B cell (primary cell): ENCODE measurements at regions of chr7 and their contacts with region 1.

Region 1: GRCh38 chr7:50092579-50093491 is at the start of gene ZPBP:
- DNase-seq: peak; percentile 83
- ATAC-seq: peak; percentile 80
- H3K4me3 ChIP-seq: peak within 1 kb of the TSS; percentile 46 to 82 (median 62)
- H3K4me3 Mint-ChIP-seq: peak within 1 kb of the TSS; percentile 94
- H3K27ac ChIP-seq: peak within 1 kb of the TSS; percentile 35 to 43
- H3K27ac Mint-ChIP-seq: peak within 1 kb of the TSS; percentile 72
- H3K4me1 ChIP-seq: peaks cover 4 to 5% of the 10 kb centered on the region in 2 donors
- H3K4me1 Mint-ChIP-seq: peaks cover 5% of the 10 kb centered on the region
- H3K27me3 ChIP-seq: no peaks in the 10 kb centered on the region
- H3K27me3 Mint-ChIP-seq: no peaks in the 10 kb centered on the region
- CTCF ChIP-seq: peak; percentile 97
- total RNA-seq, gene ZPBP: not detected in 2 replicates

Region 2: DNA sequence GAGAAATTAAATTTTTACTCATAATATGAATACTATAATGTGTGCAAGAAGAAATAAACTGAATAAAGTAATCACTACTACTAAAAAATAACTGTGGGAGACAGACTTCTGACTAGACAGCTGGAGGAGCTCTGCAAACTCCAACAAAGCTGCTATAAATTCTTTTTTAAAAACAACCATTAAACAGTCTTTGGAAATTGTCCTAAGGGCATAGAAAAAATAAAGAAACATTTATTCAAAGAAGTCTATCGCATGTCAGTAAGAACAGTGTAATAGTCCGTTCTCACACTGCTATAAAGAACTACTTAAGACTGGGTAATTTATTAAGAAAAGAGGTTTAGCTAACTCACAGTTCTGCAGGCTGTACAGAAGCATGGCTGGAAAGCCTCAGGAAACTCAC is 55.7 kb before region 1 on chr7:
- CTCF ChIA-PET with region 1: no interaction called
- POLR2A ChIA-PET with region 1: no interaction called
- intact Hi-C with region 1: no loop called
- DNase-seq: no peak
- ATAC-seq: no peak
- H3K4me3 ChIP-seq: no peak overlapping the region
- H3K4me3 Mint-ChIP-seq: no peak overlapping the region
- H3K27ac ChIP-seq: no peak overlapping the region
- H3K27ac Mint-ChIP-seq: no peak overlapping the region
- H3K4me1 ChIP-seq: no peaks in the 10 kb centered on the region
- H3K4me1 Mint-ChIP-seq: no peaks in the 10 kb centered on the region
- H3K27me3 ChIP-seq: peaks cover 0 to 17% (median 7%) of the 10 kb centered on the region in 4 experiments
- H3K27me3 Mint-ChIP-seq: peaks cover 30% of the 10 kb centered on the region
- CTCF ChIP-seq: no peak

Region 3: DNA sequence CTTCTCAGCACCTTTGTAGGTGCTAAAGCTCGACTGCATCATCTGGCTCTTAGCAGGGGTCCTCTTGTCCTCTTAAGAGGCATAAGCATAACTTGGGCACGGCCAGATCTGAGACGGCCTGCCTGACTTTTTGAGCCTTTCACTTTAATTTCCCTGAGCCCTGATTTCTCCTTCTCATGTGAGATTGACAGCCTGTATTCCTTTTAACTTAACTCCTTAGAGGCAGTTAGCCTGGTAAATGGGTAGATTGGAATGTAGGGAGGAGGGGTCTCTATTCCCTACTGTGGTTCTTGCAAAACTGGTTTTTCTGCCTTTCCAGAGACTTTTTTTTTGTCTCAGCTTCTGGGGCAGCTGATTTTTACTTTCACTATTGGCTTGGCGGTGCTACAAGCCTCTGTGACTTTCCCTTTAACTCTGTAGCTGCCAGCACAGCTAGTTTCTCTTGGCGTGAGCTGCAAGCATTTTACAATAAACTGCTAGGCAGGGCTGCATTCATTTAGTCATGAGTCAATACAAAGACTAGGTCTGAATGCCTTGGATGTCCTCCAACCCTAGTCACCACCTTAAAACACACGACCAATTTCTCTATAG is 23.8 kb before region 1 on chr7:
- CTCF ChIA-PET with region 1: interaction called, 23 read pairs
- POLR2A ChIA-PET with region 1: no interaction called
- intact Hi-C with region 1: no loop called
- DNase-seq: peak; percentile 46
- ATAC-seq: peak; percentile 57
- H3K4me3 ChIP-seq: peak overlapping the region; percentile 57 to 80 (median 74)
- H3K4me3 Mint-ChIP-seq: peak overlapping the region; percentile 92
- H3K27ac ChIP-seq: peak overlapping the region; percentile 75 to 76
- H3K27ac Mint-ChIP-seq: peak overlapping the region; percentile 96
- H3K4me1 ChIP-seq: peaks cover 20% of the 10 kb centered on the region in 2 donors
- H3K4me1 Mint-ChIP-seq: peaks cover 22% of the 10 kb centered on the region
- H3K27me3 ChIP-seq: no peaks in the 10 kb centered on the region
- H3K27me3 Mint-ChIP-seq: peaks cover 8% of the 10 kb centered on the region
- CTCF ChIP-seq: no peak

Region 4: GRCh38 chr7:50142425-50143017 is 49.7 kb after region 1 on chr7:
- CTCF ChIA-PET with region 1: interaction called, 9 read pairs
- POLR2A ChIA-PET with region 1: interaction called, 3 read pairs
- intact Hi-C with region 1: loop called (anchors 2 kb)
- DNase-seq: peak; percentile 71
- ATAC-seq: peak; percentile 71
- H3K4me3 ChIP-seq: peak overlapping the region in 4 of 5 experiments; percentile 8 to 33 (median 30)
- H3K4me3 Mint-ChIP-seq: peak overlapping the region; percentile 80
- H3K27ac ChIP-seq: peak overlapping the region in 1 of 2 donors; percentile 62
- H3K27ac Mint-ChIP-seq: peak overlapping the region; percentile 62
- H3K4me1 ChIP-seq: peaks cover 42 to 50% of the 10 kb centered on the region in 2 donors
- H3K4me1 Mint-ChIP-seq: peaks cover 49% of the 10 kb centered on the region
- H3K27me3 ChIP-seq: no peaks in the 10 kb centered on the region
- H3K27me3 Mint-ChIP-seq: no peaks in the 10 kb centered on the region
- CTCF ChIP-seq: peak; percentile 94

Region 5: GRCh38 chr7:50679218-50680007 is 586.6 kb after region 1 on chr7:
- CTCF ChIA-PET with region 1: interaction called, 39 read pairs
- POLR2A ChIA-PET with region 1: no interaction called
- intact Hi-C with region 1: loop called (anchors 1 kb)
- DNase-seq: peak; percentile 66
- ATAC-seq: no peak
- H3K4me3 ChIP-seq: no peak overlapping the region
- H3K4me3 Mint-ChIP-seq: no peak overlapping the region
- H3K27ac ChIP-seq: no peak overlapping the region
- H3K27ac Mint-ChIP-seq: no peak overlapping the region
- H3K4me1 ChIP-seq: peaks cover 8 to 10% of the 10 kb centered on the region in 2 donors
- H3K4me1 Mint-ChIP-seq: peaks cover 5% of the 10 kb centered on the region
- H3K27me3 ChIP-seq: no peaks in the 10 kb centered on the region
- H3K27me3 Mint-ChIP-seq: peaks cover 22% of the 10 kb centered on the region
- CTCF ChIP-seq: peak; percentile 73

Region 6: GRCh38 chr7:51299391-51300133 is 1206.7 kb after region 1 on chr7:
- CTCF ChIA-PET with region 1: no interaction called
- POLR2A ChIA-PET with region 1: no interaction called
- intact Hi-C with region 1: no loop called
- DNase-seq: no peak
- ATAC-seq: no peak
- H3K4me3 ChIP-seq: no peak overlapping the region
- H3K4me3 Mint-ChIP-seq: no peak overlapping the region
- H3K27ac ChIP-seq: no peak overlapping the region
- H3K27ac Mint-ChIP-seq: no peak overlapping the region
- H3K4me1 ChIP-seq: no peaks in the 10 kb centered on the region
- H3K4me1 Mint-ChIP-seq: no peaks in the 10 kb centered on the region
- H3K27me3 ChIP-seq: no peaks in the 10 kb centered on the region
- H3K27me3 Mint-ChIP-seq: no peaks in the 10 kb centered on the region
- CTCF ChIP-seq: no peak

Region 7: GRCh38 chr7:51366930-51367613 is 1274.2 kb after region 1 on chr7:
- CTCF ChIA-PET with region 1: interaction called, 11 read pairs
- POLR2A ChIA-PET with region 1: no interaction called
- intact Hi-C with region 1: loop called (anchors 5 kb)
- DNase-seq: no peak
- ATAC-seq: no peak
- H3K4me3 ChIP-seq: no peak overlapping the region
- H3K4me3 Mint-ChIP-seq: no peak overlapping the region
- H3K27ac ChIP-seq: no peak overlapping the region
- H3K27ac Mint-ChIP-seq: no peak overlapping the region
- H3K4me1 ChIP-seq: no peaks in the 10 kb centered on the region
- H3K4me1 Mint-ChIP-seq: no peaks in the 10 kb centered on the region
- H3K27me3 ChIP-seq: no peaks in the 10 kb centered on the region
- H3K27me3 Mint-ChIP-seq: no peaks in the 10 kb centered on the region
- CTCF ChIP-seq: peak; percentile 10